Heart left ventricle (tissue), 16 donors: ENCODE measurements at regions of chr7 and their contacts with region 1.

Region 1: DNA sequence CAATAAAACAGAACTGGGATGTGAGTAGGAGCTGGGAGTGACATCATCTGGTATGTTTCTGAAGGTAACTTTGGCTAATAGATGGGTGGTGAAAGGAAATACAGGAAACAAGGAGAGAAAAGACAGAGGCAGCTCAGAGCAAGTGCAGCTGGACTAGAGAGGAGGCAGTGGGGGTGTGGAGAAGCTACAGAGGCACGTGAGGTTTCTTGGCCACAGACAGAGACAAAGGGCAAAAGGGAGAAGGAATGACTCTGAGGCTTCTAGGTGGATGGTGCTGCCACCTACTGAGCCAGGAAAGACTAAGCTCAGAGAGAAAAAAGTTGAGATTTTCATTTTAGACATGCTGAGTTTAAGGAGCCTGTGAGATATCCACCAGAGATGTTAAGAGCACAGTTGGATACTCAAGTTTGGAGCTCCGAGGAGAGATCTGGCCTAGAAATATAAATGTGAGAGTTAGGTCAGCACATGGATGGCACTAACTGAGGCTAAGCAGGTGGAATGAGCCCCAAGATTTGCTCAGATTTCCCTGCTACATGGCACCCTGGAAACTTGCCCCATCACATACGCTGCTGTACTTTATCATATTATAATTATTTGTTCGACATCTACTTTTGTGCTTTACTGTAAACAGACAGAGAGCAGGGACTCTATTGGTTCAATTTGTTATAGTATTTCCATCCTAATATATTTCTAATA is 293.0 kb upstream of the IMMP2L start:
- DNase-seq: peak in 1 of 5 donors; percentile 41
- ATAC-seq: peak; percentile 55 to 85 (median 78)
- H3K4me3 ChIP-seq: no peak overlapping the region
- H3K27ac ChIP-seq: no peak overlapping the region
- H3K4me1 ChIP-seq: peaks cover 0 to 5% (median 0%) of the 10 kb centered on the region in 12 donors
- H3K27me3 ChIP-seq: no peaks in the 10 kb centered on the region
- CTCF ChIP-seq: peak in 10 of 12 donors; percentile 9 to 60 (median 36)
- POLR2A ChIP-seq: no peak

Region 2: GRCh38 chr7:111741811-111742240 is 113.5 kb before region 1 on chr7:
- intact Hi-C with region 1: loop called in 1 of 10 experiments (anchors 5 kb)
- DNase-seq: peak in 1 of 5 donors; percentile 46
- ATAC-seq: peak; percentile 42 to 78 (median 68)
- H3K4me3 ChIP-seq: no peak overlapping the region
- H3K27ac ChIP-seq: no peak overlapping the region
- H3K4me1 ChIP-seq: peaks cover 0 to 7% (median 0%) of the 10 kb centered on the region in 12 donors
- H3K27me3 ChIP-seq: no peaks in the 10 kb centered on the region
- CTCF ChIP-seq: peak; percentile 47 to 75 (median 60)
- POLR2A ChIP-seq: no peak

Region 3: GRCh38 chr7:111752022-111752582 is 103.2 kb before region 1 on chr7:
- intact Hi-C with region 1: loop called in 2 of 10 experiments (anchors 2 to 5 kb)
- DNase-seq: peak; percentile 37 to 71 (median 44)
- ATAC-seq: peak in 3 of 4 donors; percentile 50 to 56 (median 56)
- H3K4me3 ChIP-seq: no peak overlapping the region
- H3K27ac ChIP-seq: no peak overlapping the region
- H3K4me1 ChIP-seq: peaks cover 0 to under 1% (median 0%) of the 10 kb centered on the region in 12 donors
- H3K27me3 ChIP-seq: no peaks in the 10 kb centered on the region
- CTCF ChIP-seq: peak; percentile 63 to 81 (median 75)
- POLR2A ChIP-seq: no peak

Region 4: DNA sequence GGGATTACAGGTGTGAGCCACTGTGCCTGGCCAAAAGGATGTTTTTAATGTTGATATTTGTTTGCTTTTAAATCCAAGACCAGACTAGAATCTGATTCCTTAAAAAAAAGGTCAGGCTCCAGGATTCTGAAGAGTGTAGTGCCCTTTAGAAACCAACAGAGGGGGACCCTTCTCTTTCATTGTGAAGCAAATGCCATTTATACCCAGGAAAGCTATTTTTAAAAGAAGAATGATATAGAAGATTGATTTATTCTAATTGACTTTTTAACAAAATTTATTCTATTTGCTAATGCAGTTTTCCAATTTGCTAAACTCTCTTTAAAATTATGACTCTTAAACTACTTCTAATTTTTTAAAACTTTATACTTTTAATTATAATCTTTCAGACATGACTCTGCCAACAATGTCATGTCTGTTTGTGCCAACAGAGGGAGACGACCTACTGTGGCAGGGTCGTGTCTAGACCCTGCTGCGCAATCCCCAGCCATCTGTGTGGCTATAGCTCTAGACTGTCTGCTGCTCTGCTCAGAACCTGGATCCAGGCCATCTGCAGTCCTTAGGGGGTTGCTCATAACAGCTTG is 92.0 kb before region 1 on chr7:
- intact Hi-C with region 1: loop called in 7 of 10 experiments (anchors 2 to 5 kb)
- DNase-seq: no peak
- ATAC-seq: peak in 2 of 4 donors; percentile 47 to 67
- H3K4me3 ChIP-seq: no peak overlapping the region
- H3K27ac ChIP-seq: no peak overlapping the region
- H3K4me1 ChIP-seq: peaks cover 0 to 10% (median 0%) of the 10 kb centered on the region in 12 donors
- H3K27me3 ChIP-seq: no peaks in the 10 kb centered on the region
- CTCF ChIP-seq: peak; percentile 35 to 72 (median 60)
- POLR2A ChIP-seq: no peak

Region 5: GRCh38 chr7:111903797-111904196 is 48.5 kb after region 1 on chr7:
- intact Hi-C with region 1: no loop called
- DNase-seq: no peak
- ATAC-seq: no peak
- H3K4me3 ChIP-seq: no peak overlapping the region
- H3K27ac ChIP-seq: no peak overlapping the region
- H3K4me1 ChIP-seq: no peaks in the 10 kb centered on the region
- H3K27me3 ChIP-seq: no peaks in the 10 kb centered on the region
- CTCF ChIP-seq: no peak
- POLR2A ChIP-seq: no peak

Region 6: DNA sequence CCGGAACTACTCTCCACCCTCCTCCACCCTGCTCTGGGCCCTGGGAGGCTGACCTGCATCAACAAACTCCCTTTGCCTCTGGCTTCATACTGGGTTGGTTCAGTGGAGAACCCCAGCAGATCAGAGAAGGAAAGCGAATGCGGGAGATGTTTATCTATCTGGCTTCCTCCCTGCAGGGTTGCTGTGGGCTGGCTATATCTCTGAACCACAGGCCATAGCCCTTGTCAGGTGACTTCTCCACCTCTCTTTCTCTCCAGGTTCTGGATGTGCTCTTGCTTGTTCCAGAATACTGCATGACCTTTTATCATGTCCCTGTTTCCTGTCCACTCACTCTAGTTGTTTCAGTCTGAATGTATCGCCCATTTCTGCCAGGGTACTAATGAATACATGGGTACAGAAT is 543.2 kb after region 1 on chr7:
- intact Hi-C with region 1: loop called in 1 of 10 experiments (anchors 10 kb)
- DNase-seq: no peak
- ATAC-seq: no peak
- H3K4me3 ChIP-seq: no peak overlapping the region
- H3K27ac ChIP-seq: no peak overlapping the region
- H3K4me1 ChIP-seq: no peaks in the 10 kb centered on the region
- H3K27me3 ChIP-seq: peaks cover 0 to 8% (median 0%) of the 10 kb centered on the region in 9 donors
- CTCF ChIP-seq: no peak
- POLR2A ChIP-seq: no peak

Region 7: GRCh38 chr7:112405286-112405685 is 550.0 kb after region 1 on chr7:
- intact Hi-C with region 1: loop called in 2 of 10 experiments (anchors 5 to 10 kb)
- DNase-seq: no peak
- ATAC-seq: no peak
- H3K4me3 ChIP-seq: no peak overlapping the region
- H3K27ac ChIP-seq: no peak overlapping the region
- H3K4me1 ChIP-seq: no peaks in the 10 kb centered on the region
- H3K27me3 ChIP-seq: no peaks in the 10 kb centered on the region
- CTCF ChIP-seq: no peak
- POLR2A ChIP-seq: no peak